ENCODE measurements at regions of chr3 and their contacts with region 1.

Region 1: GRCh38 chr3:88180398-88180999 is 30.7 kb downstream of the C3orf38 start:
- DNase-seq: peak; percentile 62
- H3K4me3 Mint-ChIP-seq: no peak overlapping the region
- H3K27ac Mint-ChIP-seq: no peak overlapping the region
- H3K4me1 Mint-ChIP-seq: no peaks in the 10 kb centered on the region
- H3K27me3 Mint-ChIP-seq: no peaks in the 10 kb centered on the region

Region 2: DNA sequence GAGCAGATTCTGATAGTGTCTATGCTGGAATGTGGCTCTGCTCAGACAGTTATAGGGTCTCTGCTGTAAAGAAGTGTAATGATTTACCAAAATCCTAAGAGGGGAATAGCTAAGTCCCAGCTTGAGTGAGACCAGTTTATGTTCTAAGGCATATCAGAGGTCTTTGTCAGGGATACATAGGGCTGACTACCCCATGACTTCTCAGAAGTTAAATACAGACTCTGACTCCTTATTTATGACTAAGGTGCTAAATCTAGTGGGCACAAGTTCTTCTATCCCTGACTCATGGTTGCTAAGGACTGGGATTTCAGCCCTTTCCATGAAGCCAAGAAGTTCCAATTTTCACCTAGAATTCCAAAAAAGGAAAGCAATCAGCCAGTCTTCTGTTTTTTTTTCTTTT is 711.6 kb before region 1 on chr3:
- CTCF ChIA-PET with region 1: no interaction called
- intact Hi-C with region 1: no loop called
- DNase-seq: no peak
- H3K4me3 Mint-ChIP-seq: no peak overlapping the region
- H3K27ac Mint-ChIP-seq: no peak overlapping the region
- H3K4me1 Mint-ChIP-seq: no peaks in the 10 kb centered on the region
- H3K27me3 Mint-ChIP-seq: no peaks in the 10 kb centered on the region

Region 3: DNA sequence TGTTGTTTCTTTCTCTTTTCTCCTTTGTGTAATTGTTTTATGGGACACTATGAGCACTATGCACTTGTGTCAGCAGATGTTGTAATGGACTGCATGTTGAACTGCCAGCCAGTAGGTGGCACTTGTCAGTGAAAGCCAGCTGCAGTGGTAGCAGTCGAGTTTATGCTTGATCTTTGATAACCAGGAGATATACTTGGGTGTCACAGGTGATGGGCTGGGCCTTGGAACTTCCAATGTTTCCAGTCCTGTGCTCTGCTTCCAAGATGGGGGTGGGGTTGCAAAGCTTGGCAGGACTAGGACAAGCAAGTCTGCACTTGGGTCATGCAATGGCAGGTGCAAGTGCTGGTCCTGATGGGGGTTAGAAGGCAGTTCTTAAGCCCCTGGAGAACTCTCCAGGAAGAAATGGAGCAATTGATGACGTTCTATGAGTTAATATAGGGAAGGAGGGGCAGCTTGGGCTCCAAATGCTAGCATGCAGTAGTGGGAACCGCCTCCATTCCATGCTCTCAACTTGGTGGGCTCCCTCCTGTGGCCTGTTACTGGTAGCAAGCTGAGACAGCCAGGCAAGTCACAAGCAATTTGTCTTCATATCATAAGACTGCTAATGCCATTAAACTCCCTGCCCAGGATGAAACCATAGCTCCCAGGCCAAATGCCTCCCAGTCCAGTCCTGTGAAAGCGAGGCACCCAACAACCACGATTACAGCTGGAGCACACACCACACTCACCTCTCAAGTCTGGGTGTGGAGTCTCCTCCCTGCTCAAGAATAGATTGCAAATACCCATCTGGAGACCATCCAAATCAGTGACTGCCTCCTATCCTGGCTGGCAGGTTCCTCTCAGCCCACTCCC is 408.9 kb before region 1 on chr3:
- CTCF ChIA-PET with region 1: interaction called, 5 read pairs
- intact Hi-C with region 1: loop called (anchors 1 kb)
- DNase-seq: peak; percentile 56
- H3K4me3 Mint-ChIP-seq: no peak overlapping the region
- H3K27ac Mint-ChIP-seq: no peak overlapping the region
- H3K4me1 Mint-ChIP-seq: no peaks in the 10 kb centered on the region
- H3K27me3 Mint-ChIP-seq: peaks cover 17% of the 10 kb centered on the region

Region 4: GRCh38 chr3:87900061-87900460 is 280.4 kb before region 1 on chr3:
- CTCF ChIA-PET with region 1: no interaction called
- intact Hi-C with region 1: loop called (anchors 1 kb)
- DNase-seq: no peak
- H3K4me3 Mint-ChIP-seq: no peak overlapping the region
- H3K27ac Mint-ChIP-seq: no peak overlapping the region
- H3K4me1 Mint-ChIP-seq: no peaks in the 10 kb centered on the region
- H3K27me3 Mint-ChIP-seq: no peaks in the 10 kb centered on the region

Measured in activated naive CD4-positive, alpha-beta T cell treated with anti-CD3 and anti-CD28 coated beads for 36 hours (primary cell).